Naive thymus-derived CD4-positive, alpha-beta T cell (primary cell): ENCODE measurements at regions of chr17 and their contacts with region 1.

Region 1: GRCh38 chr17:46002311-46002972 is 3.4 kb downstream of the STH start:
- DNase-seq: peak; percentile 43 to 81 (median 70)
- ATAC-seq: peak; percentile 96
- H3K4me3 ChIP-seq: no peak overlapping the region
- H3K4me3 Mint-ChIP-seq: no peak overlapping the region
- H3K27ac ChIP-seq: no peak overlapping the region
- H3K27ac Mint-ChIP-seq: no peak overlapping the region
- H3K4me1 ChIP-seq: no peaks in the 10 kb centered on the region
- H3K4me1 Mint-ChIP-seq: peaks cover 0 to 4% (median 0%) of the 10 kb centered on the region in 7 donors
- H3K27me3 ChIP-seq: no peaks in the 10 kb centered on the region
- H3K27me3 Mint-ChIP-seq: peaks cover 0 to 5% (median 0%) of the 10 kb centered on the region in 5 donors

Region 2: GRCh38 chr17:45428050-45428617 is 574.3 kb before region 1 on chr17:
- CTCF ChIA-PET with region 1: no interaction called
- POLR2A ChIA-PET with region 1: no interaction called
- intact Hi-C with region 1: loop called in 1 of 2 experiments (anchors 2 kb)
- DNase-seq: peak; percentile 62 to 93 (median 81)
- ATAC-seq: peak; percentile 87
- H3K4me3 ChIP-seq: peak overlapping the region; percentile 17
- H3K4me3 Mint-ChIP-seq: peak overlapping the region; percentile 70 to 81 (median 78)
- H3K27ac ChIP-seq: no peak overlapping the region
- H3K27ac Mint-ChIP-seq: peak overlapping the region in 5 of 9 donors; percentile 3 to 82 (median 15)
- H3K4me1 ChIP-seq: peaks cover 11 to 14% of the 10 kb centered on the region in 2 donors
- H3K4me1 Mint-ChIP-seq: peaks cover 14 to 27% (median 25%) of the 10 kb centered on the region in 7 donors
- H3K27me3 ChIP-seq: no peaks in the 10 kb centered on the region
- H3K27me3 Mint-ChIP-seq: no peaks in the 10 kb centered on the region

Region 3: DNA sequence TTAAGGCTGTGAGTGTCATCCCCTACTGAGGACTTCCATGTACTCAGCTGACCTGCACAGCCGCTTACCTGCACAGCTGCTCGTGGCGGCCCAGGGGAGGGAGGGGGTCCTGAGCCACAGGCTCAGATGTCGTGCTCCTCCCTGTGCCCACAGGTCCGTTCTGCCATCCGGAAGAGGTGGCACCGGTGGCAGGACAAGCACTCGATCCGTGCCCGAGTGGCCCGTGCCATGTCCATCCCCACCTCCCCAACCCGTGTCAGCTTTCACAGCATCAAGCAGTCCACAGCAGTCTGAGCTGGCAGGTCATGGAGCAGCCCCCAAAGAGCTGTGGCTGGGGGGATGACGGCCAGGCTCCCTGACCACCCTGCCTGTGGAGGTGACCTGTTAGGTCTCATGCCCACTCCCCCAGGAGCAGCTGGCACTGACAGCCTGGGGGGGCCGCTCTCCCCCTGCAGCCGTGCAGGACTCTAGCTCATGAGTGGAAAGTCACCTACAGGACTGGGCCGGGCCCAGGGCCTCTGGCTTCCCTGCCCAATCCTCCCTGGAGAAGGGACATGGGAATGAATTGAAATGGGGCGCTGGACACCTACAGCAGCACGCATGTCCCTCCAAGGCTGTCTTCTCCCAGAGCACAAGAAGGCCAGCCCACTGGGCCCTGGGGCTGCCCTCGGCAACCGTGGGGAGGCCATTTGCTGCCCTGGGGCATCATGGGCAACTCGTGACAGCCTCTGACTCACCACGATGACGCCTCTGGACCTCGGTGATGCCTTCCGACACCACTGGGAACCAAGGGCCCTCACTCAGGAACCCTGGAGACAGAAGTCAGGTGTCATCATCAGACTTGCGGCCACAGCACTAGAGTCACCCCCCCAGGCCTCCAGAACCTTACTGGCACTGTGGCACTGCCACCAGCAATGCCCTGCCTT is 167.7 kb before region 1 on chr17:
- CTCF ChIA-PET with region 1: no interaction called
- POLR2A ChIA-PET with region 1: no interaction called
- intact Hi-C with region 1: no loop called
- DNase-seq: no peak
- ATAC-seq: no peak
- H3K4me3 ChIP-seq: no peak overlapping the region
- H3K4me3 Mint-ChIP-seq: no peak overlapping the region
- H3K27ac ChIP-seq: no peak overlapping the region
- H3K27ac Mint-ChIP-seq: no peak overlapping the region
- H3K4me1 ChIP-seq: no peaks in the 10 kb centered on the region
- H3K4me1 Mint-ChIP-seq: peaks cover 0 to 5% (median 0%) of the 10 kb centered on the region in 7 donors
- H3K27me3 ChIP-seq: no peaks in the 10 kb centered on the region
- H3K27me3 Mint-ChIP-seq: peaks cover 0 to 4% (median 0%) of the 10 kb centered on the region in 5 donors

Region 4: GRCh38 chr17:46020023-46020761 is 17.8 kb after region 1 on chr17:
- CTCF ChIA-PET with region 1: interaction called, 17 read pairs
- POLR2A ChIA-PET with region 1: no interaction called
- intact Hi-C with region 1: loop called in 1 of 2 experiments (anchors 1 kb)
- DNase-seq: peak in 8 of 9 donors; percentile 31 to 53 (median 42)
- ATAC-seq: peak; percentile 96
- H3K4me3 ChIP-seq: no peak overlapping the region
- H3K4me3 Mint-ChIP-seq: peak overlapping the region in 6 of 10 donors; percentile 2 to 53 (median 36)
- H3K27ac ChIP-seq: peak overlapping the region; percentile 43
- H3K27ac Mint-ChIP-seq: peak overlapping the region; percentile 74 to 93 (median 91)
- H3K4me1 ChIP-seq: peaks cover 20 to 31% of the 10 kb centered on the region in 2 donors
- H3K4me1 Mint-ChIP-seq: peaks cover 5 to 32% (median 11%) of the 10 kb centered on the region in 7 donors
- H3K27me3 ChIP-seq: no peaks in the 10 kb centered on the region
- H3K27me3 Mint-ChIP-seq: no peaks in the 10 kb centered on the region

Region 5: DNA sequence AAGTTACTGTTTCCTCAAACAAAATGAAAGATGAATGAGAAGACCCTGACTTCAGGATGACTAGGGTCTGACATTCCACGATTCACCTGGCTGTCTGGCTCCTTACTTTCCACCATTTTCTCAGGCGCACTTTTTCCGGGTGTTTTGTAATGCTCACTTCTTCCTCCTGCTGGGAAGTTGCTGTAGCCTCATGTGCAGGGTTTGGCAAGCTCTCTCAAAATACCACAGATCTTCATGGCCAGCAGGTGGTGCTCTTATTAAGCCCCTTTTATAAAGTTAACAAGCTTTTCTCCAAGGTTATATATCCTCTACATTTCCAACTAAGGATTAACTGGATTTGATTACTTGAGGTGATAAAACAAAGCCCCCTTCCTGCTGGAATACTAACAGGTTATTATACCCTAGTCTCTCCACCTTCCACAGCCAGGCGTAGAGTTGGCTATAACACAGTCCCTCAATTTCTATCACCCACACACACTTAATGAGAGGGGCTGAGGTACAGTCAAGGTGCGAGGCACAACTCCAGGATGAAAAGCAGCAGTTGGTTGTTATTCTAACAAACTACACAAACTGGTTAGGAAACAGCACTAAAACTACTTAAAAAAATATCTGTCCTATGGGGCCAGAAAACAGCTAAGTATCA is 42.0 kb after region 1 on chr17:
- CTCF ChIA-PET with region 1: interaction called, 29 read pairs
- POLR2A ChIA-PET with region 1: interaction called, 3 read pairs
- intact Hi-C with region 1: loop called (anchors 1 to 5 kb)
- DNase-seq: peak in 7 of 9 donors; percentile 40 to 60 (median 51)
- ATAC-seq: peak; percentile 71
- H3K4me3 ChIP-seq: no peak overlapping the region
- H3K4me3 Mint-ChIP-seq: peak overlapping the region in 1 of 10 donors; percentile 52
- H3K27ac ChIP-seq: no peak overlapping the region
- H3K27ac Mint-ChIP-seq: peak overlapping the region in 8 of 9 donors; percentile 6 to 67 (median 28)
- H3K4me1 ChIP-seq: no peaks in the 10 kb centered on the region
- H3K4me1 Mint-ChIP-seq: peaks cover 2 to 23% (median 8%) of the 10 kb centered on the region in 7 donors
- H3K27me3 ChIP-seq: no peaks in the 10 kb centered on the region
- H3K27me3 Mint-ChIP-seq: no peaks in the 10 kb centered on the region

Region 6: GRCh38 chr17:46212634-46213435 is 210.4 kb after region 1 on chr17:
- CTCF ChIA-PET with region 1: interaction called, 29 read pairs
- POLR2A ChIA-PET with region 1: no interaction called
- intact Hi-C with region 1: loop called in 1 of 2 experiments (anchors 1 kb)
- DNase-seq: peak in 7 of 9 donors; percentile 64 to 83 (median 77)
- ATAC-seq: peak; percentile 92
- H3K4me3 ChIP-seq: no peak overlapping the region
- H3K4me3 Mint-ChIP-seq: peak overlapping the region in 6 of 10 donors; percentile 7 to 35 (median 18)
- H3K27ac ChIP-seq: no peak overlapping the region
- H3K27ac Mint-ChIP-seq: peak overlapping the region in 8 of 9 donors; percentile 46 to 89 (median 80)
- H3K4me1 ChIP-seq: peaks cover 0 to 3% of the 10 kb centered on the region in 2 donors
- H3K4me1 Mint-ChIP-seq: peaks cover 24 to 69% (median 50%) of the 10 kb centered on the region in 7 donors
- H3K27me3 ChIP-seq: no peaks in the 10 kb centered on the region
- H3K27me3 Mint-ChIP-seq: no peaks in the 10 kb centered on the region